ENCODE measurements at regions of chr21 and their contacts with region 1.

Region 1: GRCh38 chr21:36630485-36631206 is 68.3 kb upstream of the SIM2 start:
- DNase-seq: peak; percentile 32
- ATAC-seq: peak; percentile 98
- H3K4me3 ChIP-seq: no peak overlapping the region
- H3K27ac ChIP-seq: no peak overlapping the region
- H3K4me1 ChIP-seq: no peaks in the 10 kb centered on the region
- H3K27me3 ChIP-seq: no peaks in the 10 kb centered on the region
- CTCF ChIP-seq: peak; percentile 65 to 89 (median 77); a peak in 5 of 6 replicates
- POLR2A ChIP-seq: no peak
- RAD21 ChIP-seq: peak; percentile 63

Region 2: DNA sequence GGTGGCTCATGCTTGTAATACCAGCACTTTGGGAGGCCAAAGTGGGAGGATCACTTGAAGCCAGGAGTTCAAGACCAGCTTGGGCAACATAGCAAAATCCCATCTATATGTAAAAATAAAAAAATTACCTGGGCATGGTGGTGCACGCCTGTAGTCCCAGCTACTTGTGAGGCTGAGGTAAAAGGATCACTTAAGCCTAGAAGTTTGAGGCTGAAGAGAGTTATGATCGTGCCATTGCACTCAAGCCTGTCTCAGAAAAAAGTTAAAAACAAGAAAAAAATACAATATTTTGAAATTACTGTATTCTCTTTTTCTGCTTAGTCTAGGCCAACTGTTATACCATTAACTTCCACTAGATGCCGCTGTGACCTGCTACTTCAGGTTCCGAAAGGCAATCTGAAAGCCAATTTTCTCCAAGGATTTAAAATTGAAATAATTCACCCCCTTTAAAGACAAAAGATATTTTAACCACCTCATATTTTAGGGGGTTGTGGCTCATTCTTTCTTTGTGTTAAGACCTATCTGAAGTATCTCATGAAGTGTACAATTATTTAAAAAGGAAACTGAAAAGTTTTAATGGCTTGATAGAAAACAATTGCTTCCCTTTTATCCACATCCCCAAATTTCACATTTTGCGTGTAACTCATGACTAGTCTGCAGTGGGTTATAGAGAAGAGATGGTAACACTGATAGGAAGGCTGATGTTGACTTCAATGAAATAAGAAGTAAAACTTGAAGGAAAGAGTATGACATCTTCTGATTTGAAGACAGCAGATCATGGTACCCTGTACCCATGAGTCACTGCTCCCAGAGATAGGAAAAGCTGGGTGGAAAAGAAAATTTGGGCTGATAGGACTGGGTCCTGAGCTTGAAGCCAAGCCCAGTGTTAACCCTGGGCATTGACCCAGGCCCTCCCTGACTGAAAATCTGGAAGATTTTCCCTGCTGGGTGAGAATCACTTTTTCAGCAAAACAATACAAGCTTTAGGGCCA is 126.3 kb before region 1 on chr21:
- CTCF ChIA-PET with region 1: interaction called, 6 read pairs
- POLR2A ChIA-PET with region 1: no interaction called
- RAD21 ChIA-PET with region 1: interaction called in 1 of 2 experiments, 4 read pairs
- intact Hi-C with region 1: loop called (anchors 10 kb)
- DNase-seq: peak; percentile 34
- ATAC-seq: peak; percentile 22; the same call in 1 of the 2 replicates
- H3K4me3 ChIP-seq: no peak overlapping the region
- H3K27ac ChIP-seq: no peak overlapping the region
- H3K4me1 ChIP-seq: no peaks in the 10 kb centered on the region; a peak in 1 of 4 replicates
- H3K27me3 ChIP-seq: no peaks in the 10 kb centered on the region
- CTCF ChIP-seq: peak; percentile 53 to 84 (median 80); a peak in 5 of 6 replicates
- POLR2A ChIP-seq: no peak
- RAD21 ChIP-seq: peak; percentile 77

Region 3: DNA sequence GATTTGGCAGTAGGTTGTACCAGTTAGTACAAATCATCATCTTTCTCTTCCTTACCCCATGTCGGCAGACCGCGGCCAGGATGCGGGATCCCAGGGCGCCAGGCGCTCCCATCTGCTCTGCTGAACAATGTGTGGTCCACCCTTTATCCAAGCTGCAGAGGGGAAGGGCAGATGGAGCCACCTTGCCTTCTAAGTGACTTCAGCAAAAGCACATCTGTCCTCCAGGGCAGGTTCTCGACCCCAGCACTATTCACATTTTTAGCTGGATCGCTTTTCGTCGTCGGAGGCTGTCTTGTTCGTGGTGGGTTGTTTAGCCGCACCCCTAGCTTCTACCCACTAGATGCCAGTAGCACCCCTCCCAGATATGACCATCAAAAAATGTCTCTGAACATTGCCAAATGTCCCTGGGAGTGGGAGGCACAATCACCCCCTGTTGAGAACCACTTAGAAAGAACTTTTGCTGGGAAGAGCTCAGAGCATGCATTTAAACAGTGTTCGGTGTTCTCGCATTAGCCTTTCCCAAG is 10.1 kb after region 1 on chr21:
- CTCF ChIA-PET with region 1: interaction called, 17 read pairs
- POLR2A ChIA-PET with region 1: no interaction called
- RAD21 ChIA-PET with region 1: no interaction called
- intact Hi-C with region 1: no loop called
- DNase-seq: no peak
- ATAC-seq: no peak
- H3K4me3 ChIP-seq: no peak overlapping the region
- H3K27ac ChIP-seq: no peak overlapping the region
- H3K4me1 ChIP-seq: no peaks in the 10 kb centered on the region
- H3K27me3 ChIP-seq: no peaks in the 10 kb centered on the region
- CTCF ChIP-seq: peak in 2 of 3 experiments; percentile 16 to 19; a peak in 1 of 6 replicates
- POLR2A ChIP-seq: no peak
- RAD21 ChIP-seq: 0 out of 2 replicates have a peak, but pooled peaks have one; percentile 22

Region 4: DNA sequence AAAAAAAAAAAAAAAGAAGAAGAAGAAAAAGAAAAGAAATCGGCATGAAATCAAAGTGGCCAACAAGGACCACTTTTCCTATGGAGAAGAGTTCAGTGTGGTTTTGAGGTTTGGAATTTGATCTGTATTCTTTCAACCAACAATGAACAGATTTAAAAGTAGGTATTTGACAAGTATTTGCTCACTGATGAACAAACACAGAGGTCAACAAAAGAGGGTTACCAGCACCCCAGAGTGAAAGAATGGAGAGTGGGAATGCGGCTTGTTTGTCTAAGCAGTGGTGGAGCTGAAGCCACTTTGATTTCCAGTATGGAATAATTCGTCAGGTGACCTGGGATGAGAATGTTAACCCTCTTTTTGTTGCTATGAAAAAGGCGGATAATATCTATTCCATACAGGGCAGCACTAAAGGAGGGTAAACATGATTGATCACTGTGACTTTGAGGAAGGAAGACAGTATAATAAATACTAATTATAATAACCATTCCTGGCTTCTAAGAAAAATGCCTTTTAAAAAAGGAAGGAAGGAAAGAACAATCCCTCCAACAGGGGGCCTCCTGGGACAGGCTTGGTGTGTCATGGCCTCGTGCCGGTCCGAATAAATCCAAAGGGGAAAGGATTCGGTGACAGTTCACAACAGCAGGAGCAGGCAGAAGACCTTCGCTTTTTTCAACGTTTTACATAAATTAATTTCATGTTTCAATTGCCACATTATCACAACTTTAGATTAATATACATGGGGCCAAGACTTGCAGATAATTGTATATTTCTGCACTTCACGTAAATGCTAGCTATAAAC is 31.1 kb after region 1 on chr21:
- CTCF ChIA-PET with region 1: interaction called, 15 read pairs
- POLR2A ChIA-PET with region 1: no interaction called
- RAD21 ChIA-PET with region 1: no interaction called
- intact Hi-C with region 1: no loop called
- DNase-seq: peak; percentile 24
- ATAC-seq: peak; percentile 89
- H3K4me3 ChIP-seq: no peak overlapping the region
- H3K27ac ChIP-seq: no peak overlapping the region
- H3K4me1 ChIP-seq: peaks cover 0 to 8% of the 10 kb centered on the region in 2 experiments; a peak in 3 of 4 replicates
- H3K27me3 ChIP-seq: no peaks in the 10 kb centered on the region
- CTCF ChIP-seq: peak; percentile 64 to 68 (median 66); a peak in 5 of 6 replicates
- POLR2A ChIP-seq: no peak
- RAD21 ChIP-seq: peak; percentile 79

Region 5: GRCh38 chr21:36820176-36821031 is 189.8 kb after region 1 on chr21:
- CTCF ChIA-PET with region 1: no interaction called
- POLR2A ChIA-PET with region 1: no interaction called
- RAD21 ChIA-PET with region 1: no interaction called
- intact Hi-C with region 1: no loop called
- DNase-seq: no peak
- ATAC-seq: no peak
- H3K4me3 ChIP-seq: no peak overlapping the region
- H3K27ac ChIP-seq: no peak overlapping the region
- H3K4me1 ChIP-seq: no peaks in the 10 kb centered on the region
- H3K27me3 ChIP-seq: no peaks in the 10 kb centered on the region
- CTCF ChIP-seq: no peak
- POLR2A ChIP-seq: no peak
- RAD21 ChIP-seq: no peak

Region 6: GRCh38 chr21:36854391-36854790 is 223.7 kb after region 1 on chr21:
- CTCF ChIA-PET with region 1: interaction called, 33 read pairs
- POLR2A ChIA-PET with region 1: no interaction called
- RAD21 ChIA-PET with region 1: interaction called, 3 to 4 read pairs
- intact Hi-C with region 1: loop called (anchors 1 kb)
- DNase-seq: no peak
- ATAC-seq: peak; percentile 93
- H3K4me3 ChIP-seq: no peak overlapping the region
- H3K27ac ChIP-seq: no peak overlapping the region
- H3K4me1 ChIP-seq: peaks cover 0 to 6% of the 10 kb centered on the region in 2 experiments; a peak in 1 of 4 replicates
- H3K27me3 ChIP-seq: no peaks in the 10 kb centered on the region
- CTCF ChIP-seq: peak; percentile 59 to 86 (median 69); a peak in 5 of 6 replicates
- POLR2A ChIP-seq: no peak
- RAD21 ChIP-seq: peak; percentile 77

Region 7: GRCh38 chr21:36917471-36918158 is 287.0 kb after region 1 on chr21:
- CTCF ChIA-PET with region 1: interaction called, 29 read pairs
- POLR2A ChIA-PET with region 1: no interaction called
- RAD21 ChIA-PET with region 1: interaction called, 4 to 10 read pairs
- intact Hi-C with region 1: no loop called
- DNase-seq: no peak
- ATAC-seq: peak; percentile 62
- H3K4me3 ChIP-seq: no peak overlapping the region
- H3K27ac ChIP-seq: no peak overlapping the region
- H3K4me1 ChIP-seq: no peaks in the 10 kb centered on the region
- H3K27me3 ChIP-seq: no peaks in the 10 kb centered on the region
- CTCF ChIP-seq: peak; percentile 51 to 52 (median 51); a peak in 5 of 6 replicates
- POLR2A ChIP-seq: no peak
- RAD21 ChIP-seq: peak; percentile 66

Region 8: DNA sequence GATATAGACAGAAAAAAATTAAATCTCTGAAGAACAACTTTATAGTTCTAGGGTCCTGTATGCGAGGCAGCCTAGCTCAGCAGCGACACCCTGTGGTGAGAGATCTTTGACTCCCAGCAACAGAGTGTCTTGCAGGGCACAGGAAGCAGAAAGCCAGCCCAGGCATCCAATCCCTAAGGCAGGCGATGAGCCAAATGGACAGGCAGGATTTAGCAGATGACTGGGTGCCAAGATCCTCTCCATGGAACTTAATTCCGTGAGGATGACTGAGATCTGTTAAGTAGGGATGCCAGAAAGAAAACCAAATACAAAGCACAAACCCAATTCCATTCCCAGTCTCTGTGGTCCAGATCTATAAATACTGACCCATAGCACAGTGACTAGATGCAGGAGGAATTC is 297.1 kb after region 1 on chr21:
- CTCF ChIA-PET with region 1: interaction called, 24 read pairs
- POLR2A ChIA-PET with region 1: no interaction called
- RAD21 ChIA-PET with region 1: interaction called, 3 to 4 read pairs
- intact Hi-C with region 1: loop called (anchors 1 kb)
- DNase-seq: peak; percentile 56
- ATAC-seq: peak; percentile 98
- H3K4me3 ChIP-seq: no peak overlapping the region
- H3K27ac ChIP-seq: no peak overlapping the region
- H3K4me1 ChIP-seq: peaks cover 0 to 4% of the 10 kb centered on the region in 2 experiments; a peak in 1 of 4 replicates
- H3K27me3 ChIP-seq: no peaks in the 10 kb centered on the region
- CTCF ChIP-seq: peak; percentile 81 to 96 (median 89)
- POLR2A ChIP-seq: no peak
- RAD21 ChIP-seq: peak; percentile 78